ENCODE measurements at regions of chr2 and their contacts with region 1.

Region 1: GRCh38 chr2:71000780-71001591 is 6.3 kb upstream of the TEX261 start:
- DNase-seq: peak in 1 of 2 donors; percentile 85
- H3K4me3 ChIP-seq: peak overlapping the region in 1 of 2 donors; percentile 35
- H3K27ac ChIP-seq: no peak overlapping the region
- H3K4me1 ChIP-seq: peaks cover 8% of the 10 kb centered on the region
- H3K27me3 ChIP-seq: no peaks in the 10 kb centered on the region
- CTCF ChIP-seq: peak; percentile 70 to 82 (median 77)
- POLR2A ChIP-seq: no peak

Region 2: GRCh38 chr2:70964596-70965386 is 36.2 kb before region 1 on chr2:
- intact Hi-C with region 1: loop called (anchors 5 kb)
- DNase-seq: no peak
- H3K4me3 ChIP-seq: peak overlapping the region; percentile 43 to 66
- H3K27ac ChIP-seq: no peak overlapping the region
- H3K4me1 ChIP-seq: peaks cover 11% of the 10 kb centered on the region
- H3K27me3 ChIP-seq: no peaks in the 10 kb centered on the region
- CTCF ChIP-seq: peak; percentile 52 to 81 (median 77)
- POLR2A ChIP-seq: no peak